ENCODE measurements at regions of chr7 and their contacts with region 1.

Region 1: GRCh38 chr7:134355927-134356326 is 39.2 kb upstream of the SLC35B4 start:
- DNase-seq: no peak
- H3K4me3 Mint-ChIP-seq: no peak overlapping the region
- H3K27ac Mint-ChIP-seq: no peak overlapping the region
- H3K4me1 Mint-ChIP-seq: peaks cover 7% of the 10 kb centered on the region
- H3K27me3 Mint-ChIP-seq: no peaks in the 10 kb centered on the region

Region 2: DNA sequence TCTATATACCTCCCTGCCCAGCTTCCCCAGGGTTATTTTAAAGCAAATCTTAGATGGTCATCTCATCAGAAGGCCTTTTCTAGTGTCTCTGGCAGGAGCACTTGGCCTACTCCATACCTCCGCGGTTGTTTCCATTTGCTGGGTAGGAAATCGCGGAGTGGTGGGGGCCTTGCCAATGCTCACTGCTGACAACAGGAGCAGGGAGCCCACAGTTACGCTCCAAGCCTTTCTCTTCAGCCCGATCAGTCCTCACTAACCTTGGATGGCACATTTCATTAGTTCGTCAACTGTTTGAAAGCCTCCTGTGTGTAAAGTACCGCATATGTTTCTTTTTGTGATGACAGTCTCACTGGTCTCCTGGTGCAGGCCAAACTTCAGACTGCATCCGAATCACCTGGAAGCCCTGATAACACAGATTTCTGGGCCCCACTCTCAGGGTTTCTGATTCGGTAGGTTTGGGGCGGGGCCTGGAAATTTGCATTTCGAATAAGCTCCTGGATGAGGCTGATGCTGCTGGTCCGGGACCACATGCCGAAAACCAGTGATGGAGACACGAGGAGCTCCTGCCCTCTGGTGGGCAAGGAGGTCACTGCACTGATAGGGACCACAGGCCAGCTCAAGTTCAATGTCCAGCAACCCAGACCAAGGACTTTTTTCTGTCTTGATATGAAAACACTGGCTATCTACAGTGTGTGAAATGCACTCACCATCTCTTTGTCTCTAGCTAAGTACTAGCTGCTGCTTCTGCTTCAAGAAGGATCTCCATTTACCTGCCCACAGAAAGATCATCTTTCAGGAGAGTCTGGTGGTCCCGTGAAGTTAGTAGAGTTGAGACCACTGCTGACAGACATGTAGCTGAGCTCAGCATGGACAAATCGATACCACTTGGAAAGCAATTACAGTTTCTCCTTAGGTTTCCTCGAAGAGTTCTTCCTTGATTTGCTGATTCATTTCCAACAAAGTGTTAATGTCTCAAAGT is 214.7 kb before region 1 on chr7:
- CTCF ChIA-PET with region 1: interaction called, 3 read pairs
- intact Hi-C with region 1: loop called (anchors 1 kb)
- DNase-seq: peak; percentile 72
- H3K4me3 Mint-ChIP-seq: peak overlapping the region; percentile 4
- H3K27ac Mint-ChIP-seq: no peak overlapping the region
- H3K4me1 Mint-ChIP-seq: peaks cover 5% of the 10 kb centered on the region
- H3K27me3 Mint-ChIP-seq: no peaks in the 10 kb centered on the region